ENCODE measurements at regions of chr17 and their contacts with region 1.

Region 1: DNA sequence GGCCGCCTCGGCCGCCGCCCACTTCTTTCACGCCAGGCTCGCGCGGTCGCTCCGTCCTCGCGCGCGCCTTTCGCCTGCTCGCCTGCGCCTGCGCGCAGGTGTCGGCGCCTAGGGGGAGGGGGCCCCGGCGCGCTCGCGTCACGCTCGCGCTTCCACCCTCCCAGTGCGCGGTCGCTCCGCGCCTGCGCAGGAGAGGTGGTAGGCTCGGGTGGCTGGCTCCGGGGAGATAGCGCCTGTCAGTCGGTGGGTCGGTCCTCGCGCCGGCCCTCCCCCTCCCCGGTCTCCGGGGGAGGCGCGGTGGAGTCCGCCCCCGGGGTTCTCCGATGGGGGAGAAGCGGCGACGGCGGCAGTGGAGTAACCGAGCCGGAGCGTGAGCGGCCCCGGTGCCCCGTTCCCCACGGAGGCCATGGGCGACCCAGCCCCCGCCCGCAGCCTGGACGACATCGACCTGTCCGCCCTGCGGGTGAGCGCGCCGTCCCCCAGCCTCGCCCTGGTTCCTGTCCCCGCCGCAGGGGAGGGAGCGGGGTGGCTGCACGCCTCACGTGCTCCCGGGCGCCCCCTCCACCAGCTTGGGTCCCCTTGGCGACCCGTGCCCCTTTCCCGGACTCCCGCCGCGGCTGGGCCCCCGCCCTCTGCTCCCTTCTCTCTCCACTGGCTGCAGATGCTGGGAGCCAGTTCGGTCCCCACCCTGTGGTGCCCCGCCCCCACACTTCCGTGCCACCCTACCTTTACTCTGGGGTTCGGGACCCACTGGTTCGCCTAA is at the start of gene MINK1:
- DNase-seq: peak; percentile 89 to 92 (median 89)
- H3K4me3 ChIP-seq: peak within 1 kb of the TSS; percentile 55 to 77
- H3K4me3 Mint-ChIP-seq: peak within 1 kb of the TSS; percentile 92 to 97 (median 96)
- H3K27ac ChIP-seq: peak within 1 kb of the TSS; percentile 84
- H3K27ac Mint-ChIP-seq: peak within 1 kb of the TSS; percentile 90 to 99 (median 97)
- H3K4me1 ChIP-seq: peaks cover 34% of the 10 kb centered on the region
- H3K4me1 Mint-ChIP-seq: peaks cover 27 to 46% (median 39%) of the 10 kb centered on the region in 4 donors
- H3K27me3 ChIP-seq: no peaks in the 10 kb centered on the region
- H3K27me3 Mint-ChIP-seq: no peaks in the 10 kb centered on the region
- total RNA-seq, gene MINK1: 134 to 139 TPM

Region 2: DNA sequence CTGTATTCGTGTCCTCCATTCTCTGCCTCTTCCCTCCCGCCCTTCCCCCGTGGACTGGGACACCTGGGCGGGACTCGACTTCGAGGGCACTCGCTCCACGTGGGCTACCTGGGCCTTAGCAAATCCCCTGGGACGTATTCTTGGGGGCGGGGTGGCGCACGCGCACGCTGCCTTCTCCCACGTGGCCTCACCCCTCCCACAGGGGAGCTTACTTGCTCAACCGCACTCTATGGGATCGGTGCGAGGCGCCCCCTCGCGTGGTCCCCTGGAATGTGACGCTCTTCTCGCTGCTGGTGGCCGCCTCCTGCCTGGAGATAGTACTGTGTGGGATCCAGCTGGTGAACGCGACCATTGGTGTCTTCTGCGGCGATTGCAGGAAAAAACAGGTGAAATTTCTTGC is 50.7 kb before region 1 on chr17:
- CTCF ChIA-PET with region 1: no interaction called
- POLR2A ChIA-PET with region 1: no interaction called
- intact Hi-C with region 1: no loop called
- DNase-seq: no peak
- H3K4me3 ChIP-seq: no peak overlapping the region
- H3K4me3 Mint-ChIP-seq: no peak overlapping the region
- H3K27ac ChIP-seq: no peak overlapping the region
- H3K27ac Mint-ChIP-seq: peak overlapping the region in 1 of 7 donors; percentile 13
- H3K4me1 ChIP-seq: peaks cover 15% of the 10 kb centered on the region
- H3K4me1 Mint-ChIP-seq: peaks cover 3 to 23% (median 10%) of the 10 kb centered on the region in 4 donors
- H3K27me3 ChIP-seq: peaks cover 31% of the 10 kb centered on the region
- H3K27me3 Mint-ChIP-seq: peaks cover 48 to 50% of the 10 kb centered on the region in 2 donors

Region 3: DNA sequence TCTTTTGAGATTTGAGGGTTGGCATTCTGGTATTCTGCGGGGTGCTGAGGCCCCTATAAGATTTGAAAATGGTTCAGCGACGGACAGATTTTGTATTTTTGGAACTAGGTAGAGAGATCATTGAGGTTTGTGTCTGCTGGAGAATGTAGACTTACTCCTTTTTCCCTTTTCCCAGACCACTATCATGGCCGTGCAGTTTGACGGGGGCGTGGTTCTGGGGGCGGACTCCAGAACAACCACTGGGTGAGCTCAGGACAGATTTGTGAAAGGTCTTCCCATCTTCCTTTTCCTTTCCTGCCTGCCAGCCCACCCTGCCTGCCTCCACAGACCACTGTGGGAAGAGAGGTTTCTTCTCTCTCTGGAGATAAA is 36.8 kb before region 1 on chr17:
- CTCF ChIA-PET with region 1: interaction called, 3 read pairs
- POLR2A ChIA-PET with region 1: interaction called, 4 read pairs
- intact Hi-C with region 1: loop called (anchors 5 kb)
- DNase-seq: no peak
- H3K4me3 ChIP-seq: peak overlapping the region; percentile 62 to 90
- H3K4me3 Mint-ChIP-seq: peak overlapping the region; percentile 99 to 100 (median 100)
- H3K27ac ChIP-seq: peak overlapping the region; percentile 83
- H3K27ac Mint-ChIP-seq: peak overlapping the region; percentile 90 to 99 (median 98)
- H3K4me1 ChIP-seq: peaks cover 10% of the 10 kb centered on the region
- H3K4me1 Mint-ChIP-seq: peaks cover 11 to 16% (median 11%) of the 10 kb centered on the region in 4 donors
- H3K27me3 ChIP-seq: no peaks in the 10 kb centered on the region
- H3K27me3 Mint-ChIP-seq: no peaks in the 10 kb centered on the region

Region 4: DNA sequence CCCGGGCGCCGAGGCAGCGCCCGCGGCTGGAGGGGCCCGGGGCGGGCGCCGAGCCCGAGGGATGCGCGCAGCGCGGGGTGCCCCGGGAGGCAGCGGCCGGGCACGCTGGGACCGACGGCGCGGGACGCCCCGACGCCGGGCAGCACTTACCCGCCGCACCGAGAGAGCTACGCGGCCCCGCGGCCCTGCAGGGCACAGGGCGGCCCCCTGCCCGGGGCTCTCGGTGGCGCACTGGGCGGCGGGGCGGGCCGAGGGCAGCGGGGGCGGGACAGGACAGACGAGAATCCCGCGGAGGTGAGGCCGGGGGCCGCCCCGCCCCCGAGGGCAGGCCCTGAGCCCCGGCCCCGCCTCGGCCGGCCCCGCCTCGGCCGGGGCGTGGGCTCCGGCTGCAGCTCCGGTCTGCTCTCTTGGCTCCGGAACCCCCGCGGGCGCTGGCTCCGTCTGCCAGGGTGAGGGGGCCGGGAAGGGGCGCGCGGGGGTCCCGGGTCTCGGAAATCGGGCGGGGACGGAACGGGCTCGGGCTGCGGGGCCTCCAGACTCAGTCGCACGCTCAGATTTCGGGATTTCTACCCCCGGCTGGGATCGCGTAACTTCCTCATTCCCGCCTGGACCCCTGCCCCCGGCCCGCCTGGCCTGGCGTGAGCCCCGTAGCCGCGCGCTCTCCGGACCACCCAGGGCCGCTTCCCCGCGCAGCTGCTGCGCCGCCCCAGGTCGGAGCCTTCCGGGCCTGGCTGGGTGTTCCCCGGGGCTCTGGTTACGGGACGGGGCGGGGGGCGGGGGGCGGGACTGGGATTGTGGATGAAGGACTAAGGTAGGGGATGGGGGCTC is 26.4 kb before region 1 on chr17 and contains the start of gene PLD2:
- CTCF ChIA-PET with region 1: interaction called, 5 read pairs
- POLR2A ChIA-PET with region 1: interaction called, 25 read pairs
- intact Hi-C with region 1: loop called (anchors 1 kb)
- DNase-seq: peak; percentile 84 to 87 (median 85)
- H3K4me3 ChIP-seq: peak within 1 kb of the TSS; percentile 47 to 54
- H3K4me3 Mint-ChIP-seq: peak within 1 kb of the TSS; percentile 69 to 85 (median 82)
- H3K27ac ChIP-seq: peak within 1 kb of the TSS; percentile 67
- H3K27ac Mint-ChIP-seq: peak within 1 kb of the TSS; percentile 23 to 83 (median 60)
- H3K4me1 ChIP-seq: peaks cover 15% of the 10 kb centered on the region
- H3K4me1 Mint-ChIP-seq: peaks cover 3 to 23% (median 10%) of the 10 kb centered on the region in 4 donors
- H3K27me3 ChIP-seq: no peaks in the 10 kb centered on the region
- H3K27me3 Mint-ChIP-seq: no peaks in the 10 kb centered on the region
- total RNA-seq, gene PLD2: 30.8 to 37.5 TPM

Region 5: GRCh38 chr17:4881761-4882555 is 48.6 kb after region 1 on chr17:
- CTCF ChIA-PET with region 1: interaction called, 4 read pairs
- POLR2A ChIA-PET with region 1: no interaction called
- intact Hi-C with region 1: loop called (anchors 10 kb)
- DNase-seq: peak in 4 of 5 donors; percentile 64 to 69 (median 65)
- H3K4me3 ChIP-seq: no peak overlapping the region
- H3K4me3 Mint-ChIP-seq: no peak overlapping the region
- H3K27ac ChIP-seq: no peak overlapping the region
- H3K27ac Mint-ChIP-seq: peak overlapping the region in 2 of 7 donors; percentile 29 to 37
- H3K4me1 ChIP-seq: no peaks in the 10 kb centered on the region
- H3K4me1 Mint-ChIP-seq: peaks cover 0 to 3% (median 0%) of the 10 kb centered on the region in 4 donors
- H3K27me3 ChIP-seq: no peaks in the 10 kb centered on the region
- H3K27me3 Mint-ChIP-seq: no peaks in the 10 kb centered on the region

Region 6: DNA sequence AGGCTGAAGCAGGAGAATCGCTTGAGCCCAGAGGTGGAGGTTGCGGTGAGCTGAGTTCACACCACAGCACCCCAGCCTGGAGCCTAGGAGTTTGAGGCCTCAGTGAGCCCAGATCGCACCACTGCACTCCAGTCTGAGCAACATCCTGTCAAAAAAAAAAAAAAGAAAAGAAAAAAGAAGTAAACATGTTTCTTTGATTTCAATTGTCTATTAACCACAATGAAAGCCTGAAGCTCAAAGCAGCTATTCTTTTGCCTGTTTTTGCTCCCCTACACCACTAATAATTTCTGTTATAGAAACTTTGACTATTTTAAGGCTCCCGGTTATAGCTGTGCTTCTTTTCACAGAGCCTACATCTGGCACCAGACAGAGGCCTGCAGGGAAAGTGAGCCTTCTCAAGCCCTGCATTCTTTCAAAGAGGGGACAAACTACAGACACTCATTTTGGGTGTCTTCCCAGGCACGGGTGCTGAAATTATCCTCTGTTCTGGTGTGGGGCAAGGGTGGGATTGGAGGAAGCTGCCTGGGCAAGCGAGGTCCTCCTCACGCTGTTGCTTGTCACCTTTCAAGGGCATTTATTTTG is 216.0 kb after region 1 on chr17:
- CTCF ChIA-PET with region 1: no interaction called
- POLR2A ChIA-PET with region 1: no interaction called
- intact Hi-C with region 1: no loop called
- DNase-seq: peak; percentile 79 to 89 (median 85)
- H3K4me3 ChIP-seq: no peak overlapping the region
- H3K4me3 Mint-ChIP-seq: peak overlapping the region in 7 of 8 donors; percentile 61 to 89 (median 74)
- H3K27ac ChIP-seq: peak overlapping the region; percentile 42
- H3K27ac Mint-ChIP-seq: peak overlapping the region; percentile 93 to 98 (median 95)
- H3K4me1 ChIP-seq: peaks cover 60% of the 10 kb centered on the region
- H3K4me1 Mint-ChIP-seq: peaks cover 32 to 60% (median 47%) of the 10 kb centered on the region in 4 donors
- H3K27me3 ChIP-seq: no peaks in the 10 kb centered on the region
- H3K27me3 Mint-ChIP-seq: no peaks in the 10 kb centered on the region